Activated naive CD4-positive, alpha-beta T cell treated with anti-CD3 and anti-CD28 coated beads for 36 hours (primary cell): ENCODE measurements at regions of chr2 and their contacts with region 1.

Region 1: DNA sequence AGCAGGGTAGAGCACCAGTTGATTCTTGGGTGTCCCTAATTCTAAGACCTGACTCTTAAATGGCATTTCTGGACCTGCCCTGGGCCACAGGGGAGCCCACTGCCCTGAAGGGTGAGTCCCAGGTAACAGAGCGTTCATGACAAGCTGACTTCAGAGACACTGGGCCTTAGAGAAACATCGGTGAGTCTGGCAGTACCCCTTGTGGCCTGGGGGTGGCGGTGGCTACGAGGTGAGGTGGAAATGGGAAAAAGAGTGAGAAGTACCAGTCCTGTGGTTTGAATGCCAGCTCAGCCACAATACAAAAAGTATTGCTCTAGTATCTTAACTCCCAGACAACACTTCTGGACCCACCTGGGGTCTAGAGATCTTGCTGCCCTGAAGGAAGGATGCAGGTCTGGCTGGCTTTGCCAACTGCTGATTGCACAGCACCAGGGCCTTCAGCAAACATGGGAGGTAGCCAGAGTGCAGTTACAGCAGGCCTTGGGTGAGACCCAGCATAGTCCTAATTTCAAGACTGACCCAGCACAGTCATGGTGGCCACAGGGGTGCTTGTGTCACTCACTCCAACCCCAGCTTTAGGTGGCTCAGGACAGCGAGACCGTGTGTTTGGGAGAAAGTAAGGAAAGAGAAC is 44.5 kb downstream of the USP34 start:
- DNase-seq: peak; percentile 87
- H3K4me3 Mint-ChIP-seq: no peak overlapping the region
- H3K27ac Mint-ChIP-seq: peak overlapping the region; percentile 84
- H3K4me1 Mint-ChIP-seq: peaks cover 62% of the 10 kb centered on the region
- H3K27me3 Mint-ChIP-seq: no peaks in the 10 kb centered on the region

Region 2: DNA sequence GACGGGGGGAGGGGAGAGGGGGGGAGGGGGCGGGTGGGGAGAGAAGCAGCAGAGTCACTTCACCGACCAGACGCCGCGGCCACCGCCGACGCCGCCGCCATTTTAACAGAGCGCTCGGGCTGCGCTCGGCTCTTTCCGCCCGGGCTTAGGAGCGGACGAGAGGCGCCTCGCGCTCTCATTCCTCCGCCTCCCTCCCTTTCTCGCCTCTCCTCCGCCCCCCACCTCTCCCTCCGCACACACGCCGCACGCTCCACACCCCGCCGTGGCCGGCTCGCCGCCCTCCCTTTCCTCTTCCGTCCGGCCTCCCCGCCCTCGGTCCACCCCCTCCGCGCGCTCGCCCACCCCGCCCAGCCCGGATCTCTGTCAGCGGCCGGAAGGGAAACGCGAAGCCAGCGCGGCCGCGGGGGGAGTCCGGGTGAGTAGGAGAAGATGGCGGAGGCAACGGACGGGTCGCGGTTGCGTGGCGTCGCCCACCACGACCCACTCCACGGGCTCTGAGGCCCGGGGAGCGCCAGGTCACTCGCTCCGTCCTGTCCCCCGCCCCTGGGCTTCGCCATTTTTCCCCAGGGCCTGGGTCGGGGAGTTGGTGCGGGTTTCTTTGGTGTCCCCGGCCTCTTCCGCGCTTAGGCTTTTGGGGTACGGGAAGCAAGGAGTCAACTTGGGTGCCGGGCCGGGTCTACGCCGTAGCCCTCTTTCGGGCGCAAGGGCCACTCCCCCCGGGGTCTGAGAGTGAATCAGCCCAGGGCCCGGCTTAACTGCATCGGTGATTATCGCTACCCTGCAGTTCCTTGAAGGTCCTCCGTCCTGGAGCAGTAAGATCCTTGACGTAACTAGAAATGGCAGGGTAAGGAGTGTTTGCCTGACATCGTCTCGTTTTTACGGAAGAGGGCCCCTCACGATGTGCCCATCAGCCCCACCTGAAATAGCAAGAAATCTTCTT is 44.9 kb after region 1 on chr2 and contains the start of gene USP34:
- CTCF ChIA-PET with region 1: interaction called, 6 read pairs
- intact Hi-C with region 1: loop called (anchors 1 kb)
- DNase-seq: peak; percentile 94
- H3K4me3 Mint-ChIP-seq: peak within 1 kb of the TSS; percentile 98
- H3K27ac Mint-ChIP-seq: peak within 1 kb of the TSS; percentile 97
- H3K4me1 Mint-ChIP-seq: peaks cover 31% of the 10 kb centered on the region
- H3K27me3 Mint-ChIP-seq: no peaks in the 10 kb centered on the region
- total RNA-seq, gene USP34: 59.5 to 60.4 TPM

Region 3: GRCh38 chr2:61633250-61633649 is 206.9 kb after region 1 on chr2:
- CTCF ChIA-PET with region 1: no interaction called
- intact Hi-C with region 1: loop called (anchors 1 kb)
- DNase-seq: no peak
- H3K4me3 Mint-ChIP-seq: no peak overlapping the region
- H3K27ac Mint-ChIP-seq: no peak overlapping the region
- H3K4me1 Mint-ChIP-seq: no peaks in the 10 kb centered on the region
- H3K27me3 Mint-ChIP-seq: no peaks in the 10 kb centered on the region

Region 4: GRCh38 chr2:61658841-61659780 is 232.7 kb after region 1 on chr2:
- CTCF ChIA-PET with region 1: interaction called, 6 read pairs
- intact Hi-C with region 1: loop called (anchors 1 kb)
- DNase-seq: no peak
- H3K4me3 Mint-ChIP-seq: no peak overlapping the region
- H3K27ac Mint-ChIP-seq: no peak overlapping the region
- H3K4me1 Mint-ChIP-seq: no peaks in the 10 kb centered on the region
- H3K27me3 Mint-ChIP-seq: no peaks in the 10 kb centered on the region

Region 5: DNA sequence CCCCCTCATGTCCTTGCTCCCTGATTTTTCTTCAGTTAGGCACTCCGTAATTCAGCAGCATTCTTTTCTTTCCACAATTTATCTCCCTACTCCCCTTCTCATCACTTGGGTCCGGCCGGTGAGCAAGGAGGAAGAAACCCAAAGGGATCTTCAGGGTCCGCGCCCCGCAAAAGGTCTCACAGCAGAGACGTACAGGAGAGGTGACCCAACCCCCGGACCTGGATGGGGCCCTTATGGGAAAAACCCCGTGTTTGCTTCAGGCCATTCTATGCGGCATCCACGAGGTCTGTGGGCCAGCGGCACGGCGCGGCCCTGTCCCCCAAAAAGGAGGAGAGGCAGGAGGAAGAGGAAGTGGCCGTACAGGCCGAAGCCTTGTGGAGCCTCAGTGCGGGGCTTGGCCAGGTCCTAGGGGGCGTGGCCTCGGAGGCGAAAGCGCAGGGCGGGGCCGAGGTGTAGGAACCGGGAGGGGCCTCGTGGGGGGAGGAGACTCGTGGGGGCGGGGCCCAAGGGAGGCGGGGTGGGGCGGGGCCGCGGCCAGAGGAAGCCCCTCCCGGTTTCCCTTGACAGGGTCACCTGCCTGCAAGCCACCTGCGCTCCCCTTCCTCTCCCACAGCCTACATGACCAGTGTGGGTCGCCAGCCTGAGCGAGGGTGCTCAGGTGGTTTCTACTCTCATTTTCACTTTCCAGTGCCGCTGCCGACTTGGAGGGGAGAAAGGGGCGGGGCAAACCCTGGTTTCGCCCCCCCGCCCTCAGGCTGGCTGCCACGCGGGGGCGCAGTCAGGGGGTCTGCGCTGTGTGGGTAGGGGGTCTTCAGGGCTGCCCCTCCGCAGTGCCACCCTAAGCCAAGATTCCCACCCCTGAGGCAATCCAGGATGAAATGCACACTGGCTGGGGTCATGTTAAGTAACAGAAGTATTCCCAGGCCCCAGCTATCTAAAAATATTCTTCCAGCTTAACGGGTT is 268.2 kb after region 1 on chr2:
- CTCF ChIA-PET with region 1: no interaction called
- intact Hi-C with region 1: loop called (anchors 1 kb)
- DNase-seq: peak; percentile 88
- H3K4me3 Mint-ChIP-seq: peak overlapping the region; percentile 86
- H3K27ac Mint-ChIP-seq: peak overlapping the region; percentile 59
- H3K4me1 Mint-ChIP-seq: peaks cover 11% of the 10 kb centered on the region
- H3K27me3 Mint-ChIP-seq: no peaks in the 10 kb centered on the region

Region 6: GRCh38 chr2:61789807-61790602 is 363.6 kb after region 1 on chr2:
- CTCF ChIA-PET with region 1: interaction called, 3 read pairs
- intact Hi-C with region 1: loop called (anchors 2 kb)
- DNase-seq: no peak
- H3K4me3 Mint-ChIP-seq: no peak overlapping the region
- H3K27ac Mint-ChIP-seq: no peak overlapping the region
- H3K4me1 Mint-ChIP-seq: peaks cover 6% of the 10 kb centered on the region
- H3K27me3 Mint-ChIP-seq: peaks cover 2% of the 10 kb centered on the region